ENCODE measurements at regions of chr19 and their contacts with region 1.

Region 1: GRCh38 chr19:11356676-11357550 is 1.7 kb downstream of the PLPPR2 start:
- DNase-seq: no peak
- CTCF ChIP-seq: no peak

Region 2: GRCh38 chr19:11367528-11367927 is 10.6 kb after region 1 on chr19:
- CTCF ChIA-PET with region 1: interaction called, 11 read pairs
- POLR2A ChIA-PET with region 1: no interaction called
- DNase-seq: no peak
- CTCF ChIP-seq: no peak